H1 (cell line): ENCODE measurements at regions of chr11 and their contacts with region 1.

Region 1: GRCh38 chr11:133058501-133058900 is 473.8 kb downstream of the OPCML start:
- DNase-seq: no peak
- H3K4me3 ChIP-seq: no peak overlapping the region
- H3K27ac ChIP-seq: no peak overlapping the region
- H3K4me1 ChIP-seq: peaks cover 0 to 9% (median 0%) of the 10 kb centered on the region in 4 experiments; a peak in 1 of 7 replicates
- H3K27me3 ChIP-seq: no peaks in the 10 kb centered on the region; a peak in 2 of 7 replicates
- CTCF ChIP-seq: peak; percentile 19 to 35 (median 34); a peak in 3 of 4 replicates
- EP300 ChIP-seq: no peak
- POLR2A ChIP-seq: no peak
- RAD21 ChIP-seq: peak; percentile 17 to 33

Region 2: DNA sequence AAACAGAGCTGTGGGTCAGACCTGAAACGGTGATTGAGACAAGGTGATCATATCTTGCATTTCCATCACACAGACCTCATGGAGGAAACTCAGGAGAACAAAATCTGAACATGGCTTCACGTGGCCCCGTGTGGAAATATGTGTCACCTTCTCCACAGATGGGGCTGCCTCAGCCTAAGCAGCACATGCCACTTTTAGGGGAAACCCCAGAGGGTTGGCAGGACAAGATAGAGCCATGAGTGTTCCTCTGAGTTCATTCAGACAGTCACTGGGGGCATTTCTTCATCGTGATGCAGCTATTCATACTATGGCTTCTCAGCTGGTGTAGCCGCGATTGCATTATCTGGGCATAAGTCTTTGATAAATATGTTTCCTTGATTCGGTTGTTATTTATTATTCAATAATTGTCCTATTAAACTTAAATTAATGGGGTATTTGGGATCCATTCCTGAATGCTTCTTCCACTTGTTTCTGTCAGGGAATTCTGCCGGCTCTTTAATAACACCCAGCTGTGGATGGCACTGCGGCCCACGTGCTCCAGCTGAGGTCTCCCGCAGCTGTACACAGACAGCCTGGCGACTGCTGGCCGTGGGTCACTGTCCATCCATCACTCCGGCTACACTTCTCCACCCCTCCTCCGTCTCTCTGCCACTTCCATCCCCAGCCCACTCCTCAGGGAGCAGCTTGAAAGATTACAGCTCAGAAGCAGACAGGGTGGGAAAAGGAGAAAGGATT is 11.3 kb before region 1 on chr11:
- CTCF ChIA-PET with region 1: interaction called, 18 read pairs
- POLR2A ChIA-PET with region 1: interaction called, 4 read pairs
- DNase-seq: no peak
- H3K4me3 ChIP-seq: no peak overlapping the region
- H3K27ac ChIP-seq: no peak overlapping the region
- H3K4me1 ChIP-seq: peaks cover 2 to 9% (median 5%) of the 10 kb centered on the region in 4 experiments; a peak in 5 of 7 replicates
- H3K27me3 ChIP-seq: no peaks in the 10 kb centered on the region
- CTCF ChIP-seq: no peak
- EP300 ChIP-seq: no peak
- POLR2A ChIP-seq: no peak
- RAD21 ChIP-seq: no peak